ENCODE measurements at regions of chr11 and their contacts with region 1.

Region 1: DNA sequence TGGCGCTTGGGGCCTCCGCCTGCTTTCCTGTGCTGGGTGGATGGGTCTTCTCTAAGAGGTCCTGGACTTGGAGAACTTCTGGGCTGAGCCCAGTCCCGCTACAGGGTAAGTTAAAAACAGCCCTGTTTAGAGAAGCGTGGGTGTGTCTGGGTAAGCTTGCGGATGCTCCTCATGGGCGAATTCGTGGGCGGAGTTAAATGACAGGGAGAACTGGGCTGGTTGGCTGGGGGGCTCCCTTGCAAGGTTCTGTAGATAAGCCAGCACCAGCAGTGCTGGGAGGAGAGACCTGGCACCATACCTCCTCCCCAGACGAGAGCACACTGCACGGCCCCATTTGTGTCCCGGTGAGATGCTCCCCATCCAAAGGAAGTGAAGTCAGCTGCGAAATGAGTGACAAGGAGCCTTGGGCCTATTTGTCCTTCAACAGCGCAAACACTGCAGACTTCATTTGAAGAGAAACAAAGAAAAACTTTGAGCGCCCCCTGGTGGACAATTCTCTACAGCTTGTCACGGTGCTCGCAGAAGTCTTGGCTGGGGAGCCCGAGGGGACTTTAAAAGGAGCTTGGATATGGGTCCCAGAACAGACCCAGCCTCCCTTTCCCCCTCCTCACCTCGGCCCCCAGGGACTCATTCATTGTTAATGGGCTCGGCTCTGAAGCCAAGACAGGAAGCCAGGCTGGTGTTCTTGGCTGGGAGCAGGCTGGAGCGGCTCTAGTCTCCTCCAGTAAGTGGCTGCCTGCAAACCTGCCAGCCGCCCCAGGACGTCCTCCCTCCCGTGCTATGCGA is 39.5 kb downstream of the TP53I11 start:
- DNase-seq: peak; percentile 73
- ATAC-seq: peak; percentile 80
- H3K4me3 ChIP-seq: no peak overlapping the region
- H3K27ac ChIP-seq: no peak overlapping the region
- H3K4me1 ChIP-seq: peaks cover 4% of the 10 kb centered on the region
- H3K27me3 ChIP-seq: no peaks in the 10 kb centered on the region
- CTCF ChIP-seq: peak; percentile 88

Region 2: GRCh38 chr11:44556735-44557409 is 354.4 kb before region 1 on chr11:
- intact Hi-C with region 1: loop called (anchors 10 kb)
- DNase-seq: no peak
- ATAC-seq: peak; percentile 79
- H3K4me3 ChIP-seq: no peak overlapping the region
- H3K27ac ChIP-seq: no peak overlapping the region
- H3K4me1 ChIP-seq: peaks cover 13% of the 10 kb centered on the region
- H3K27me3 ChIP-seq: no peaks in the 10 kb centered on the region
- CTCF ChIP-seq: peak; percentile 76

Region 3: DNA sequence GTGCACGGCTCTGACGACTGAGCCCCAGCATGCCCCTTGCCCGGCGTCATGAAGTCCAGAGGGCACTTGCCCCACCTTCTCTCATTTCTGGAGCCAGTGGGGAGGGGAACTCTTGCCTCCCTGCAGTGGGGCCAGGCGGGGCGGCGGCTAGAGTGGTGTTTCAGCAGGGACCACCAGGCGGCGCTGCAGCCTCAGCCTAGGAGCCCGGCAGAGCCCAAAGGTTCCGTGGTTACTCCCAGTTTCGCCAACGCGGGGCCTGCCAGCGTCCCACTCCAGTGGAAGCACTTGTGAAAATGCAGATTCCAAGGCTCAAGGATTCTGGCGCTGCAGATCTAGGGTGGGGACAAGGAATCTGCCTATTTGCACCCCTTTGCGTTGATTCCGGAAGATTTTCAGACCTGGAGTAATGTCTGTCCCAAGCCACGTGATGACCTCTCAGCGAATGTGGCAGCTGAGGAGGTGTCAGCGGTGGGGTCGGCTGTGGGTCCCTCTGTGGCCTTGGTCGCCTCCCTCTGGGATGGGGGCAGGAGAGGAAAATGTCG is 290.0 kb before region 1 on chr11:
- intact Hi-C with region 1: loop called (anchors 5 kb)
- DNase-seq: peak; percentile 87
- ATAC-seq: peak; percentile 85
- H3K4me3 ChIP-seq: no peak overlapping the region
- H3K27ac ChIP-seq: no peak overlapping the region
- H3K4me1 ChIP-seq: peaks cover 15% of the 10 kb centered on the region
- H3K27me3 ChIP-seq: no peaks in the 10 kb centered on the region
- CTCF ChIP-seq: peak; percentile 97

Region 4: GRCh38 chr11:45089676-45090499 is 178.7 kb after region 1 on chr11:
- intact Hi-C with region 1: no loop called
- DNase-seq: no peak
- ATAC-seq: no peak
- H3K4me3 ChIP-seq: no peak overlapping the region
- H3K27ac ChIP-seq: peak overlapping the region; percentile 64
- H3K4me1 ChIP-seq: peaks cover 49% of the 10 kb centered on the region
- H3K27me3 ChIP-seq: no peaks in the 10 kb centered on the region
- CTCF ChIP-seq: peak; percentile 4